ENCODE measurements at regions of chr1 and their contacts with region 1.

Region 1: GRCh38 chr1:202009326-202010179 is 834 bp upstream of the ELF3 start:
- DNase-seq: peak; percentile 77 to 86 (median 79)
- H3K4me3 ChIP-seq: no peak overlapping the region
- H3K27ac ChIP-seq: peak overlapping the region in 1 of 2 donors; percentile 65
- H3K4me1 ChIP-seq: no peaks in the 10 kb centered on the region
- H3K27me3 ChIP-seq: no peaks in the 10 kb centered on the region
- CTCF ChIP-seq: peak; percentile 81 to 86 (median 84)
- EP300 ChIP-seq: no peak
- POLR2A ChIP-seq: no peak

Region 2: GRCh38 chr1:202085682-202086404 is 76.3 kb after region 1 on chr1:
- intact Hi-C with region 1: no loop called
- DNase-seq: peak in 1 of 5 donors; percentile 40
- H3K4me3 ChIP-seq: no peak overlapping the region
- H3K27ac ChIP-seq: no peak overlapping the region
- H3K4me1 ChIP-seq: no peaks in the 10 kb centered on the region
- H3K27me3 ChIP-seq: no peaks in the 10 kb centered on the region
- CTCF ChIP-seq: no peak
- EP300 ChIP-seq: no peak
- POLR2A ChIP-seq: no peak

Region 3: GRCh38 chr1:202122639-202123335 is 113.2 kb after region 1 on chr1 and contains the start of gene GPR37L1:
- intact Hi-C with region 1: loop called in 3 of 4 experiments (anchors 5 kb)
- DNase-seq: peak in 4 of 5 donors; percentile 56 to 79 (median 58)
- H3K4me3 ChIP-seq: no peak within 1 kb of the TSS
- H3K27ac ChIP-seq: no peak within 1 kb of the TSS
- H3K4me1 ChIP-seq: no peaks in the 10 kb centered on the region
- H3K27me3 ChIP-seq: no peaks in the 10 kb centered on the region
- CTCF ChIP-seq: peak in 2 of 3 donors; percentile 12 to 39
- EP300 ChIP-seq: no peak
- POLR2A ChIP-seq: no peak
- total RNA-seq, gene GPR37L1: 0.10 to 0.34 (median 0.13) TPM in 5 of 7 donors, not detected in the others

Region 4: DNA sequence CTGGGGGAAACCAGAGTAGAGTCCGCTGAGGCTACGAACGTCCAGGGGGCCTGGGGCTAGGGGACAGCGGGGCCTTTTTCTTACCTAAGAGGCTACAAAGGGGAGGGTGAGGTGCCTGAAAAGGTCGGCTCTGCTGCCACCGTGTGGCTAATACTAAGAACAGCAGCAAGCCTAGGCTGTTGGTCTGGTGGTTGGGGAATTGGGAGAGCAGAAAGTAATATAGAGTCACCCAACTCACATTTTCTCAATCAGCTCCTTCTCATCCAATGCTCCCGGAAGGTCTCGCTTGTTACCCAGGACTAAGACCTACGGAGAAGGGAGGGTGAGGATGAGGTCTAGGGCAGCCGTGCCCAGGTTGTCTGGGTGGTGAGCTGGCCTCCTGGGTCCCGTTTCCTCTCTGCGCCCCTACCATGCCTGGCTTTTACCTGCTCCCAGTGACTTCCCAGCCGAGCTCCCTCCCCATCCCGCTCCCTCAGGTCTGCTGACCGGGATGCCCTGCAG is 125.7 kb after region 1 on chr1:
- intact Hi-C with region 1: loop called (anchors 2 to 5 kb)
- DNase-seq: peak; percentile 50 to 77 (median 66)
- H3K4me3 ChIP-seq: no peak overlapping the region
- H3K27ac ChIP-seq: peak overlapping the region; percentile 57 to 93
- H3K4me1 ChIP-seq: peaks cover 18% of the 10 kb centered on the region
- H3K27me3 ChIP-seq: no peaks in the 10 kb centered on the region
- CTCF ChIP-seq: peak; percentile 64 to 88 (median 78)
- EP300 ChIP-seq: no peak
- POLR2A ChIP-seq: no peak

Measured in ovary (tissue), 10 donors.